Left lung (tissue), 14 donors: ENCODE measurements at regions of chr2 and their contacts with region 1.

Region 1: DNA sequence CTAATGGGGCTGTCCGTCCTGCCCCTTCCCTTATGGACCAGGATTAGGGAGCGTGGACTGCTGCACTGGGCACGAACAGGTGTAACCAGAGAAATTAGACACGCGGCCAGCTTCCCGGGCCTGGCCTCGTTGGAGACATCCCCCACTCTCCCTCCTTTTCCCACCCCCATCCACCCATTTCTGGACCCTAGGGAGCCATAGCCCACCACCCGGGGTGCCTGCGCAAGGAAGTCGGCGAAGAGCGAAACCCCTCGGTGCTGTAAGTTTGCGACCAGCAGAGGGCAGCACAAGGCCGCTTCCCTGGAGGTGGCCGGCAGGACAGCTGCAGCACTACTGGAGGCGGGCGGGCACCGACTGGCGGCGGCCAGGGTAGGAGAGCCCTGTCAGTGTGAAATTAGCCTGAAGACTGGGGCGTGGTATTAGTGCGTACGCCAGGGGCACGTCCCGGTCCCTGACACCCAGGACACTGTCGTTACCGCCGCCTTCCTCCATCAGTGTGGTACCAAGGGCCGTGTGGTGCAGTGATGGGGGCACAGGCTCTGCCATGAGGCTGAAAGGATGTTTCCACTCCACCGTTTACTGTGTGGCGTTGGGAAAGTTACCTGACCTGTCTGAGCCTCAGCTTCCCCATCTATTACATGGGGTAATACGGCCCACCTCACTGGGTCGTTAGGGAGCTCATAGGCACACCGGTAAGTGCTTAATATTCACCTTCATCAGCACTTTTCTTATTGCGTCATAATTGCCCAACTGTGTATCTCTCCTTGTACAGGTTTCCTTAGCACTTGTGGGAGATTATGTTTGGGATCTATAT is 36.0 kb upstream of the CD207 start:
- DNase-seq: peak; percentile 75 to 94 (median 86)
- ATAC-seq: peak; percentile 100
- H3K4me3 ChIP-seq: no peak overlapping the region
- H3K27ac ChIP-seq: no peak overlapping the region
- H3K4me1 ChIP-seq: peaks cover 0 to 9% of the 10 kb centered on the region in 2 donors
- H3K27me3 ChIP-seq: peaks cover 10 to 68% of the 10 kb centered on the region in 2 donors
- CTCF ChIP-seq: peak; percentile 86 to 88

Region 2: GRCh38 chr2:70771446-70771845 is 100.2 kb before region 1 on chr2:
- intact Hi-C with region 1: no loop called
- DNase-seq: no peak
- ATAC-seq: no peak
- H3K4me3 ChIP-seq: no peak overlapping the region
- H3K27ac ChIP-seq: no peak overlapping the region
- H3K4me1 ChIP-seq: peaks cover 6 to 16% of the 10 kb centered on the region in 2 donors
- H3K27me3 ChIP-seq: peaks cover 24 to 86% of the 10 kb centered on the region in 2 donors
- CTCF ChIP-seq: no peak

Region 3: DNA sequence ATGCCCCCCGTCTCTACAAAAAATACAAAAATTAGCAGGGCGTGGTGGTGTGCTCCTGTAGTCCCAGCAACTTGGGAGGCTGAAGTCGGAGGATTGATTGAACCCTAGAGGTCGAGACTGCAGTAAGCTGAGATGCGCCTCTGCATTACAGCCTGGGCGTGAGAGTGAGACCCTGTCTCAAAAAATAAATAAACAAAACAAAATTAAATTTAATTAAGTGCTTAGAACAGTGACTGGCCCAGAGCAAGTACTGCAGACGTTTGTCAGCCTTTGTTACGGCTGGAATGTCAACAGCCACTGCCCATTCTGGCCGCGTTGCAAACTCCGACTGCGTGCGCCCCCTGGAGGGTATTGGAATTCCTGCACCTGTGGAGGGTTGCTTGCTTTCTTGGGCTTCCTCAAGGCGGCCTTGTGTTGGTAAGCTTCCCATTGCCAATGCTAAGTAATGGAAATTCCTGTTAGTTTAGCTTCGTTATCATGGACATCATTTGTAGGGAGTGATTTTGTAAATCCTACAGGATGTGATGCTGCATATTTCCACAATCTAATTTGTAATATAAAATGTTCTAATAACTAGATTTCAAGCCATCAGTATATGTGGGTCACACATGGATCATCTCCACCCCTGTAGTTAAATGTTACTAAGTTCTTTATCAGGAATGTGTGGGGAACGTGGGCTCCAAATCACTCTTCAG is 48.2 kb after region 1 on chr2:
- intact Hi-C with region 1: loop called in 1 of 2 experiments (anchors 5 kb)
- DNase-seq: peak; percentile 59 to 91 (median 80)
- ATAC-seq: peak; percentile 99
- H3K4me3 ChIP-seq: no peak overlapping the region
- H3K27ac ChIP-seq: no peak overlapping the region
- H3K4me1 ChIP-seq: no peaks in the 10 kb centered on the region
- H3K27me3 ChIP-seq: peaks cover 0 to 33% of the 10 kb centered on the region in 2 donors
- CTCF ChIP-seq: peak; percentile 90 to 92

Region 4: DNA sequence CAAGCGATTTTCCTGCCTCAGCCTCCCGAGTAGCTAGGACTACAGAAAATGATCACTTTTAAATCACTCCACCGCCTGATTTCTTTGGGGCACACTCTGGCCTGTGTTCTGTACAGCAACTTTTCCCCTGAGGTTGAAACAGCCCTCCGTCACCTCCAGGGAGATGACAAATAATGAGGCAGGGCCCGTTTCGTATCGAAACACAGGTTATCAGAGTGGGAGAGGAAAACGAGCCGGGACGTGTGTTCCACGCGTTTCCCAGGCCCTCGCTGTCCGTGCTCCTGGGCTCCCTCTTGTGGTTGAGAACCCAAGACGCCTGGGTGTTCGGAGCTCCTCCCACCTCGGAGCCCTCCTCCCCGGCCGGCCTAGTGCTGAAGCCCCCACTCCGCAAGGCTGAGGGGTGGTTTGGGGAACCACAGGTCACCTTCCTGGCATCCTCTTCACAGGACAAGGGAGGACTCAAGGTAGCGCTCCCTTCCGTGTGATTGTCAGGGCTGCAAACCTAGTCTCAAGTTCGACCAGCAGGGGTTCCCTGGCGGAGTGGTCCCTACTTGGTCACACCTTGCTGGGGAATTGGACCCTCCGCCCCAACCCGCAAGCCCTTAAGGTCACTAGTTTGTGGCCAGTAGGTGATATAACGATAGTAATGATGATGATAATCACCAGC is 76.9 kb after region 1 on chr2:
- intact Hi-C with region 1: loop called in 1 of 2 experiments (anchors 5 kb)
- DNase-seq: peak; percentile 74 to 90 (median 79)
- ATAC-seq: peak; percentile 98
- H3K4me3 ChIP-seq: no peak overlapping the region
- H3K27ac ChIP-seq: no peak overlapping the region
- H3K4me1 ChIP-seq: peaks cover 0 to 10% of the 10 kb centered on the region in 2 donors
- H3K27me3 ChIP-seq: peaks cover 10 to 47% of the 10 kb centered on the region in 2 donors
- CTCF ChIP-seq: peak; percentile 87 to 89

Region 5: DNA sequence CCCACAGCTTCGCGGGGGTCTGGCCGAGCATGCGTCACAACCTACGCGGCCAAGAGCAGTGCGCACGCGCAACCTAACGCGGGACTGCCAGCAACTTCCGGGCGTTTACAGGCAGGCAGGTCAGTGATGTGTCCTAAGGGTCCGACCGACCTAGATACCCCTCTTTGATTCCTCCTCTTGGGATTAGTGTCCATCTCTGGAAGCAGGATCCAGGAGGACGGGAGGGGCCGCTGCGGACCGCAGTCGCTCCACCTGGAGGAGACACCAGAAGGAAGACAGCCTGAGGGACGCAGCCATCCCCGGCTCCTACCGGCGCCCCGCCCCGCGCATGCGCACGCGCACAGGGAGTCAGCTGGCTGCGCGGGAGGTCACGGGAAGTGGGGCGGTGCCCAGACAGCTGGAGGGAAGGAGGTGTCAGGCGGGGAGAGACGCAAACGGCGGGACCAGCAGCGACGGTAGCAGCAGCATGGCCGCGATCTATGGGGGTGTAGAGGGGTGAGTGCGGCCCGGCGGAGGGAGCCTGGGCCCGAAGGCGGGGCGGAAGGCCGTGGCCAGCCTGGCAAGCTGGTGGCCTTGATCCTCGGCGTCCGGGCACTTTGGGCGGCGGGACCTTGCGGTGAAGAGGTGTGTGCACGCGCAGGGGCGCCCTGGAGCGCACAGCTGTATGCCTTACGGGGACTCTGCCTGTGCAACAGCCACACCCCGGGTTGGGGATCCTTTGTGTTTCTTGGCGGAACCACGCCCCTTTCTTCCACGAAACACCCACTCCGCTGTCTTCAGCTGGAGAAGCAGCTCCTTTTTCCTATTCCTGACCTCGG is 196.8 kb after region 1 on chr2 and contains the start of gene NAGK:
- intact Hi-C with region 1: no loop called
- DNase-seq: peak; percentile 97 to 100 (median 98)
- ATAC-seq: peak; percentile 91
- H3K4me3 ChIP-seq: peak within 1 kb of the TSS; percentile 78 to 100
- H3K27ac ChIP-seq: peak within 1 kb of the TSS; percentile 89 to 96
- H3K4me1 ChIP-seq: peaks cover 12 to 81% of the 10 kb centered on the region in 2 donors
- H3K27me3 ChIP-seq: no peaks in the 10 kb centered on the region
- CTCF ChIP-seq: no peak
- polyA plus RNA-seq, gene NAGK: 89.7 to 109 (median 101) TPM

Region 6: DNA sequence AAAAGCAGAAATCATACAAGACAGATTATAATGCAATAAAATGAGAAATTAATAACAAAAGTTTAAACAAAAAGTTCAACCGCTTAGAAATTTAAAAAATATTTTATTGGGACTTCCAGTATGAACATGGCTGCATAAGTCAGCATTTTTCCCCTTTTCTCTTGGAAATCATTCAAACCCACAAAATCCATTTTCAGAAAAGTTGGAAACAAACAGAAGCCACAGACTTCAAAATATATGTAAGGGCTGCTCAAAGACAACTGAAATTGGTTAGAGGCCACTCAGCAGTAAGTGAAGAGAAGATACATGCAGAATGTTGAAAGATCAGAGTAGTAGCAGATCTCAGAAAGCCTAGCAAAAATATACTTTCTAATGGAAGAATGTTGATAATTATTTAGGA is 775.8 kb after region 1 on chr2:
- intact Hi-C with region 1: no loop called
- DNase-seq: no peak
- ATAC-seq: peak; percentile 33
- H3K4me3 ChIP-seq: no peak overlapping the region
- H3K27ac ChIP-seq: no peak overlapping the region
- H3K4me1 ChIP-seq: peaks cover 0 to 9% of the 10 kb centered on the region in 2 donors
- H3K27me3 ChIP-seq: no peaks in the 10 kb centered on the region
- CTCF ChIP-seq: no peak